ENCODE measurements at regions of chr19 and their contacts with region 1.

Region 1: GRCh38 chr19:13952154-13953035 is at the start of gene DCAF15:
- DNase-seq: peak; percentile 99 to 100 (median 100)
- ATAC-seq: peak; percentile 99
- H3K4me3 ChIP-seq: peak within 1 kb of the TSS; percentile 55 to 92 (median 76)
- H3K27ac ChIP-seq: peak within 1 kb of the TSS; percentile 65 to 90 (median 81)
- H3K4me1 ChIP-seq: peaks cover 5 to 31% (median 15%) of the 10 kb centered on the region in 12 donors
- H3K27me3 ChIP-seq: no peaks in the 10 kb centered on the region
- CTCF ChIP-seq: no peak
- POLR2A ChIP-seq: peak in 1 of 2 donors; percentile 54
- total RNA-seq, gene DCAF15: 8.4 to 21.4 (median 17.6) TPM

Region 2: GRCh38 chr19:13905938-13906904 is 46.2 kb before region 1 on chr19 and contains the starts of genes BRME1 and CC2D1A:
- intact Hi-C with region 1: loop called in 3 of 10 experiments (anchors 1 to 5 kb)
- DNase-seq: peak; percentile 93 to 97 (median 95)
- ATAC-seq: peak; percentile 96 to 100 (median 99)
- H3K4me3 ChIP-seq: peak within 1 kb of the TSS; percentile 63 to 98 (median 83)
- H3K27ac ChIP-seq: peak within 1 kb of the TSS in 11 of 12 donors; percentile 17 to 83 (median 67)
- H3K4me1 ChIP-seq: peaks cover 0 to 19% (median 14%) of the 10 kb centered on the region in 12 donors
- H3K27me3 ChIP-seq: no peaks in the 10 kb centered on the region
- CTCF ChIP-seq: peak in 1 of 12 donors; percentile 5
- POLR2A ChIP-seq: peak in 1 of 2 donors; percentile 67
- total RNA-seq, gene BRME1: 0.23 to 1.2 (median 0.70) TPM in 7 of 9 donors, not detected in the others
- total RNA-seq, gene CC2D1A: 14.4 to 36.3 (median 19.2) TPM

Region 3: DNA sequence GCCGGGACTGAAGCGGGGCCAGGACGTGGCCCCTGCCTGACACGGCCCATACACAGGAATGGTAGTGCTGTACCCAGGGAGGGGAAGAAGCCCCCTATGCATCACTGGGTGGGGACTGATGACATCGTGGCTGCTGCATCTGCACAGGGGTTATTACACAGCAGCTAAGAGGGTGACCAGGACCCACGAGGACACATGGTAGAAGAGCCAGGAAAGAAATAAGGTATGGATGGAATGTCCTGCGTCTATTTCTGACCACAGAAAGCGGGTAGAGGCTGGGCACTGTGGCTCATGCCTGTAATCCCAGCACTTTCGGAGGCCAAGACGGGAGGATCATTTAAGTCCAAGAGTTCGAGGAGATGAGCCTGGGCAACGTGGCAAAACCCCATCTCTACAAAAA is 24.1 kb after region 1 on chr19:
- intact Hi-C with region 1: loop called in 1 of 10 experiments (anchors 1 kb)
- DNase-seq: peak in 1 of 5 donors; percentile 59
- ATAC-seq: peak; percentile 10 to 70 (median 58)
- H3K4me3 ChIP-seq: no peak overlapping the region
- H3K27ac ChIP-seq: peak overlapping the region; percentile 32 to 89 (median 80)
- H3K4me1 ChIP-seq: peaks cover 0 to 41% (median 17%) of the 10 kb centered on the region in 12 donors
- H3K27me3 ChIP-seq: no peaks in the 10 kb centered on the region
- CTCF ChIP-seq: no peak
- POLR2A ChIP-seq: no peak

Region 4: GRCh38 chr19:13986348-13986904 is 34.0 kb after region 1 on chr19:
- intact Hi-C with region 1: loop called in 1 of 10 experiments (anchors 5 kb)
- DNase-seq: peak; percentile 91 to 96 (median 91)
- ATAC-seq: peak; percentile 50 to 87 (median 66)
- H3K4me3 ChIP-seq: peak overlapping the region in 7 of 12 donors; percentile 8 to 44 (median 18)
- H3K27ac ChIP-seq: peak overlapping the region; percentile 79 to 99 (median 92)
- H3K4me1 ChIP-seq: peaks cover 2 to 47% (median 23%) of the 10 kb centered on the region in 12 donors
- H3K27me3 ChIP-seq: no peaks in the 10 kb centered on the region
- CTCF ChIP-seq: no peak
- POLR2A ChIP-seq: peak in 1 of 2 donors; percentile 26

Region 5: DNA sequence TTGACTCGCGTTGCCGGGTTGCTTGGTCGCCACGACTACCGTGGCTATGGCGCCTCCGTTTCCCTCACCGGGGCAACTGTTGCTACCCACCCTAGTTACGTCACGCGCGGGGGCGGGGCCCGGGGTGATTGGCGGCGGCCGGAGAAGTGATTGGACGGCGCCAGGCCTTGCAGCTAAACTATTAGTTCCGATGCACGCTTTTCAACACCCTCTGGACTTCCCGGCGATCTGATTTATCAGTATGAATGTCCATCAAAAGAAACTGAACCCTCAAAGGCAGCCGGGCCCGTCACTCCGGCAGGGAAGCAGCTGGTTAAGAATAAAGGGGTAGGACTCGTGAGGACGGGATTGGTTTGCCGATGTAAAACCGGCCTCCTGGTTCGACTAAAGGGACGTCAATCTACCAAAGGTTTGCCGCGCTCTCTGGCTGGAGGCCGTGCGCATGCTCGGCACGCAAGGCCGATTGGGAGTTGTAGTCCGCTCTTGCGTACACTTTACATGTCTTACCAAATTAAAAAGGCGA is 53.9 kb after region 1 on chr19 and contains the start of gene RFX1:
- intact Hi-C with region 1: loop called in 8 of 10 experiments (anchors 1 to 10 kb)
- DNase-seq: peak; percentile 100
- ATAC-seq: peak; percentile 87 to 93 (median 91)
- H3K4me3 ChIP-seq: peak within 1 kb of the TSS; percentile 63 to 99 (median 86)
- H3K27ac ChIP-seq: peak within 1 kb of the TSS; percentile 96 to 100 (median 98)
- H3K4me1 ChIP-seq: peaks cover 0 to 47% (median 31%) of the 10 kb centered on the region in 12 donors
- H3K27me3 ChIP-seq: no peaks in the 10 kb centered on the region
- CTCF ChIP-seq: no peak
- POLR2A ChIP-seq: no peak
- total RNA-seq, gene RFX1: 6.0 to 15.4 (median 11.6) TPM

Measured in heart left ventricle (tissue), 16 donors.